Activated CD4-positive, alpha-beta T cell treated with anti-CD3 and anti-CD28 coated beads for 36 hours (primary cell): ENCODE measurements at regions of chr10 and their contacts with region 1.

Region 1: GRCh38 chr10:89086801-89087521 is 96.4 kb downstream of the FAS start:
- DNase-seq: peak; percentile 53
- ATAC-seq: peak; percentile 55
- H3K4me3 Mint-ChIP-seq: peak overlapping the region; percentile 11
- H3K27ac Mint-ChIP-seq: peak overlapping the region; percentile 78
- H3K4me1 Mint-ChIP-seq: peaks cover 11% of the 10 kb centered on the region
- H3K27me3 Mint-ChIP-seq: peaks cover under 1% of the 10 kb centered on the region

Region 2: DNA sequence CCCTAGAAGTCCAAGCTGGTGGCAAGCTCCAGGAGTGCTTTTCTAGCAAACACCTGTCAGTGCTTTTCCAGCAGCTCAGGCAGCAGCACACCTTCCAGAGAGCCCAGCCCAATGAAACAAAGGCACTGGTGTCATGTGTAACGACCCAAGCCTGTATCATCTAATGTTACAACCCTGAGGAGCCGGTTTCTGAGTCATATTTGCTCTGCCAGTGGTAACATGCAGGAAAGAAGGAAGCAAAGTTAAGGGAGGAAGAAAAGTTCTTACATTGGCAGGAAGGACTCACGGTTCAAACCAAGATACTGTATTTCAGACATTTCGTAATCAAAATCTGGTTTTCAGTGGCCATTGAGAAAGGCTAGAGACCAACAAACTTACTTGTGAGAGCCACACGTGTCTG is 235.3 kb before region 1 on chr10 and contains the start of gene ANKRD22:
- CTCF ChIA-PET with region 1: no interaction called
- POLR2A ChIA-PET with region 1: no interaction called
- intact Hi-C with region 1: loop called in 1 of 2 experiments (anchors 2 kb)
- DNase-seq: no peak
- ATAC-seq: no peak
- H3K4me3 Mint-ChIP-seq: no peak within 1 kb of the TSS
- H3K27ac Mint-ChIP-seq: no peak within 1 kb of the TSS
- H3K4me1 Mint-ChIP-seq: peaks cover 18% of the 10 kb centered on the region
- H3K27me3 Mint-ChIP-seq: peaks cover 9% of the 10 kb centered on the region
- total RNA-seq, gene ANKRD22: 0.37 TPM

Region 3: DNA sequence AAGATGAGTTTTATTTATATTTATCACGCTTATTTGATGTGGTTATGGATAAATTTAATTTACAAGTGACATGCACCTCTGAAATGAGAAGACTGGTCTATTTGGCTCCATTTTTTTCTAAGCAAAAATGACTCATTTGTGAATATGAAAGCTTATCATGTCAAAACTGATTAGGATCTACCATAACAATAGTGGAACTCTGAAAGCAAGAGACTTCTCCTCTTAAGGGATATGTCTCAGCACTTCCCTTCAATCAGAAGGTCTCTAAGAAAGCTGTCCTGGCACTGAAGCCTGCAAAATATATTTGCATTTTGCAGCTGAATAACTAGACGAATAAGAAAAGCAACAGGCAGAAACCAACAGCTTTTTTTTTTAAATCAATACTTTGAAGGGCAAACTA is 83.6 kb before region 1 on chr10:
- CTCF ChIA-PET with region 1: no interaction called
- POLR2A ChIA-PET with region 1: no interaction called
- intact Hi-C with region 1: loop called in 1 of 2 experiments (anchors 1 kb)
- DNase-seq: no peak
- ATAC-seq: peak; percentile 65
- H3K4me3 Mint-ChIP-seq: no peak overlapping the region
- H3K27ac Mint-ChIP-seq: no peak overlapping the region
- H3K4me1 Mint-ChIP-seq: peaks cover 47% of the 10 kb centered on the region
- H3K27me3 Mint-ChIP-seq: no peaks in the 10 kb centered on the region

Region 4: GRCh38 chr10:89332123-89332633 is 245.2 kb after region 1 on chr10:
- CTCF ChIA-PET with region 1: no interaction called
- POLR2A ChIA-PET with region 1: no interaction called
- intact Hi-C with region 1: loop called in 1 of 2 experiments (anchors 1 kb)
- DNase-seq: peak; percentile 41
- ATAC-seq: peak; percentile 54
- H3K4me3 Mint-ChIP-seq: peak overlapping the region; percentile 62
- H3K27ac Mint-ChIP-seq: peak overlapping the region; percentile 63
- H3K4me1 Mint-ChIP-seq: peaks cover 79% of the 10 kb centered on the region
- H3K27me3 Mint-ChIP-seq: peaks cover 8% of the 10 kb centered on the region

Region 5: DNA sequence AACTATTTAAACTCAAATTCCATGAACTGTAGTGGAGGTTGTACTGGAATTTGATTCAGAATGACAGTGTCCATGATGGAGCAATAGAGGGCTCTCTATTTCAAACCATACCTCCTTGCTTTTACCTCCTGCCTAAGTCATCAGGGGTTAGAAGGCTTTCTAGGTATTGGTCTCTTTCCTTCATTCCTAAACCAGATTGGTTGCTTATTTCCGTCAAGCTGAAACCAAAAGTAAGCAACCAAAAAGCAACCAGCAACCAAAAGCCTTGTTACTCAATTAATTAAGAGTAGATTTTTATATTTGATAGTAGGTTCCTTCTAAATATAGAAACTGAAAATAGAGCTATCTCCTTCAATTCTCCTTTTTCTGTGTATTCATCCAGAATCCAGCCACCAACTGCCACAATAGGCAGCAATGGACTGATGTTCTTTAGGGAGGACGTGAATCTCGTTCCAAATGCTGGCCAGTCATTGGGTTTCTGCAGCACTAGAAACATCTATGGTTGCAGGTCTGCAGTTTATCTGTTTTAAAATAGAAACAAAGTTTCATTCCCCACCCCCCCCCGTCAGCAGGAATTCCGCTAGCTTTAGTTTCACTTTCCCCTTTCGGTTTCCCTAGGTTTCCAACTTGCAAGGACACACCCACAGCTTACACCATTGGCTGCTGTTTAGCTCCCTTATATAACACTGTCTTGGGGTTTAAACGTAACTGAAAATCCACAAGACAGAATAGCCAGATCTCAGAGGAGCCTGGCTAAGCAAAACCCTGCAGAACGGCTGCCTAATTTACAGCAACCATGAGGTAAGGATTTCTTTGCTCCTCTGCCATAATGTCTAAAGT is 305.2 kb after region 1 on chr10 and contains the start of gene IFIT1:
- CTCF ChIA-PET with region 1: interaction called, 3 read pairs
- POLR2A ChIA-PET with region 1: no interaction called
- intact Hi-C with region 1: loop called in 1 of 2 experiments (anchors 5 kb)
- DNase-seq: peak; percentile 53
- ATAC-seq: peak; percentile 87
- H3K4me3 Mint-ChIP-seq: peak within 1 kb of the TSS; percentile 72
- H3K27ac Mint-ChIP-seq: peak within 1 kb of the TSS; percentile 79
- H3K4me1 Mint-ChIP-seq: peaks cover 27% of the 10 kb centered on the region
- H3K27me3 Mint-ChIP-seq: no peaks in the 10 kb centered on the region
- total RNA-seq, gene IFIT1: 5.9 to 6.5 TPM

Region 6: DNA sequence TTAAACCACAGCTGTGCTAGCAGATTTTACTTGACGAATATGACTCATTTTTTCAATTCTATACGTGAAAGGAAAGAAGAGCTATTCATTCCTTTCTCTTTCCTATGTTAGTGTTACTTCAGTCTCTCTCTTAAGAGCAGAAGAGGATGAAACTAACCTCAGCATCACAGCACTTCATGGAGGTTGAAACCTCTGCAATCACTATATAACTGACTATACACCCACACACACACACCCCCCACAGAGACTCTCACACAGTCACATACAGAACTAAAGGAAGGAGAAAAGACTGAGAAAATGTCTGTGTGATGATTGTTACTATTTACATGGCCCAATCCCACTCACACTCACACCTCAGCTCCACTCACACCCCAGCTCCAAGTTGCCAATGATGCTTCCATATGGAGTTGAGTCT is 718.6 kb after region 1 on chr10:
- CTCF ChIA-PET with region 1: no interaction called
- POLR2A ChIA-PET with region 1: no interaction called
- intact Hi-C with region 1: loop called in 1 of 2 experiments (anchors 10 kb)
- DNase-seq: peak; percentile 87
- ATAC-seq: peak; percentile 98
- H3K4me3 Mint-ChIP-seq: no peak overlapping the region
- H3K27ac Mint-ChIP-seq: peak overlapping the region; percentile 55
- H3K4me1 Mint-ChIP-seq: peaks cover 26% of the 10 kb centered on the region
- H3K27me3 Mint-ChIP-seq: peaks cover 34% of the 10 kb centered on the region